CD4-positive, alpha-beta T cell (primary cell): ENCODE measurements at regions of chr3 and their contacts with region 1.

Region 1: GRCh38 chr3:139343895-139344856 is at the start of gene MRPS22:
- DNase-seq: peak; percentile 64 to 92 (median 75)
- ATAC-seq: peak; percentile 98
- H3K4me3 ChIP-seq: peak within 1 kb of the TSS; percentile 92
- H3K4me3 Mint-ChIP-seq: no peak within 1 kb of the TSS
- H3K27ac ChIP-seq: peak within 1 kb of the TSS; percentile 73 to 93
- H3K27ac Mint-ChIP-seq: no peak within 1 kb of the TSS
- H3K4me1 ChIP-seq: peaks cover 21% of the 10 kb centered on the region
- H3K4me1 Mint-ChIP-seq: peaks cover 5% of the 10 kb centered on the region
- H3K27me3 ChIP-seq: no peaks in the 10 kb centered on the region
- H3K27me3 Mint-ChIP-seq: peaks cover 8% of the 10 kb centered on the region
- CTCF ChIP-seq: no peak
- total RNA-seq, gene MRPS22: 39.6 to 42.6 TPM

Region 2: GRCh38 chr3:138329127-138329983 is 1014.8 kb before region 1 on chr3 and contains the start of gene NME9:
- CTCF ChIA-PET with region 1: no interaction called
- POLR2A ChIA-PET with region 1: no interaction called
- intact Hi-C with region 1: loop called in 1 of 2 experiments (anchors 10 kb)
- DNase-seq: peak; percentile 80 to 97 (median 90)
- ATAC-seq: peak; percentile 85
- H3K4me3 ChIP-seq: peak within 1 kb of the TSS; percentile 69
- H3K4me3 Mint-ChIP-seq: peak within 1 kb of the TSS; percentile 98
- H3K27ac ChIP-seq: peak within 1 kb of the TSS; percentile 49 to 81
- H3K27ac Mint-ChIP-seq: peak within 1 kb of the TSS; percentile 88
- H3K4me1 ChIP-seq: peaks cover 20% of the 10 kb centered on the region
- H3K4me1 Mint-ChIP-seq: peaks cover 37% of the 10 kb centered on the region
- H3K27me3 ChIP-seq: no peaks in the 10 kb centered on the region
- H3K27me3 Mint-ChIP-seq: no peaks in the 10 kb centered on the region
- CTCF ChIP-seq: peak; percentile 71
- total RNA-seq, gene NME9: 0.80 TPM in 1 of 2 experiments, not detected in the other

Region 3: GRCh38 chr3:139329345-139329850 is 14.8 kb before region 1 on chr3:
- CTCF ChIA-PET with region 1: interaction called, 11 read pairs
- POLR2A ChIA-PET with region 1: interaction called, 3 read pairs
- intact Hi-C with region 1: no loop called
- DNase-seq: peak; percentile 74 to 91 (median 84)
- ATAC-seq: peak; percentile 97
- H3K4me3 ChIP-seq: peak overlapping the region; percentile 23
- H3K4me3 Mint-ChIP-seq: peak overlapping the region; percentile 27
- H3K27ac ChIP-seq: no peak overlapping the region
- H3K27ac Mint-ChIP-seq: no peak overlapping the region
- H3K4me1 ChIP-seq: peaks cover 9% of the 10 kb centered on the region
- H3K4me1 Mint-ChIP-seq: peaks cover 17% of the 10 kb centered on the region
- H3K27me3 ChIP-seq: peaks cover 10 to 20% of the 10 kb centered on the region in 2 experiments
- H3K27me3 Mint-ChIP-seq: peaks cover 38% of the 10 kb centered on the region
- CTCF ChIP-seq: peak; percentile 99

Region 4: DNA sequence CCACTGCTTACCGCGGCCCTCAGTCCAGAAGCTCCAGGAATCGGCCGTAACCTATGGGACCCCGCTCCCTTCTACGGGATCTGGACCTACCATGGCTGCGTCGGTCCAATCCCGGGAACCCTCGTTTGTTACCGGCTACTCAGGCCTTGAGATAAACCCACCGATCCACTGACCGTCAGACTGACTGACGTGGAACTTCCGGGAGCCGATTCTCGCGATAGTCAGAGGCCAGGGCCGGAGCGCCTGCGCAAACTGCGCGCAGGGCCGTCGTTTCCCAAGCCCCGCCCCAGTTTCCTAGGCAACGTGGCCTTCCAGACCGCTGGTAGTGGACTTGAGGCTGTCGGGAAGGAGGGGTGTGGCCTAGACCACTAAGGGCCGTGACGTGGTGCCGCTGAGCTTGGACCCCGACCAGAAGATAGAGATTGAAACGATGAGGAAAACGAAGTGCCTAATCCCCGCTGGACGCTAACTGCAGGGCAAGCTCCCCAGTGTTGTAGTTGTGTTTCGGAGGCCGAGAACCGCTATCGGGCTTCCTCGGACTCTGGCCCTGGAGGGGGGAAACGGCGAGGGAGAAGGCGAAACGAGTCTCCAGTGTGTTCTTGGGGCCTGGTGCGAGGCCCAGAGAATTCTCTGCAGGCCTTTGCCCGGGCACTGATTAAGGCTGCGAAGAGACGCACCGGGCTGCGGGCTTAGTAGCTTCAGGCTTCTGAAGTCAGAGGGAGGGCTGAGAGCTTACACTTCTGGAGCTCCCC is 45.5 kb after region 1 on chr3 and contains the start of gene COPB2:
- CTCF ChIA-PET with region 1: no interaction called
- POLR2A ChIA-PET with region 1: interaction called, 6 read pairs
- intact Hi-C with region 1: loop called in 1 of 2 experiments (anchors 1 kb)
- DNase-seq: peak; percentile 82 to 97 (median 94)
- ATAC-seq: peak; percentile 82
- H3K4me3 ChIP-seq: peak within 1 kb of the TSS; percentile 71
- H3K4me3 Mint-ChIP-seq: peak within 1 kb of the TSS; percentile 96
- H3K27ac ChIP-seq: peak within 1 kb of the TSS; percentile 85 to 89
- H3K27ac Mint-ChIP-seq: peak within 1 kb of the TSS; percentile 98
- H3K4me1 ChIP-seq: peaks cover 26% of the 10 kb centered on the region
- H3K4me1 Mint-ChIP-seq: peaks cover 57% of the 10 kb centered on the region
- H3K27me3 ChIP-seq: no peaks in the 10 kb centered on the region
- H3K27me3 Mint-ChIP-seq: no peaks in the 10 kb centered on the region
- CTCF ChIP-seq: no peak
- total RNA-seq, gene COPB2: 13.0 to 13.8 TPM

Region 5: DNA sequence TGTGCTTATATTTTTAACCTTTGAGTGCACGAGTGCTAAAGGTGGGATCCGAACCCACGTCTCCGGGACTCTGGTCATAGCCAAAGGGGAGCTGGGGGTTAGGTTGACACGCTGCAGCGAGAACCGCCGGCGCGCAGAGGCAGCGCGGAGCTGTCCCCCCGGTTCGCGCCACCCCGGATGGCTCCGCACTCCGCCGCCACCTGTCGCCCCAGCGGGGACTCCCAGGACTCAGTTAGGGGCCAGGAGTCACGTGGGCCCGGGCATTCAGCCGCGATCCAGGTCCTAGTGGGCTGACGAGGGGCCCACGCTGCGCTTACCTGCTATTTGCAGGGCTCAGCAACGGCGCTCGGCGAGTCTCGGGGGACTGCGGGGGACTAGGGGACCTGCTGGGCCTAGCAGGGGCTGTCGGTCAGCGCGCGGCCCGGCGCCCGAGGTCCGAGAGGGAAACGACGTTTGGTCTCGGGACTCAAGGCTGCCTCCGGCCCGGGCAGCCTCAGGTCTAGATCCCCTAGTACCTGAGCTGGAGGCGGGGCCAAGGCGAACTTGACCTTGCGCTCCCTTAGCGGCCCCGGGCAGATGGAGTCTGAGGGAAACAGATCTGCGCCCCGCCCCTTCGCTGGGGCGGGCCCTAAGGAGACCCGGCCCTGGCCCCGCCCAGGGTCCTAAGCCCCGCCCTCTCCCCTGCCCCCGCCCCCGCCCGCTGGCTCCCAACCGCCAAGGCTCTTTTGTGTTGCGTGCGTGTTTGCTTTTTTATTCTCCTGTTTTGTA is 333.4 kb after region 1 on chr3 and contains the start of gene NMNAT3:
- CTCF ChIA-PET with region 1: no interaction called
- POLR2A ChIA-PET with region 1: no interaction called
- intact Hi-C with region 1: loop called in 1 of 2 experiments (anchors 5 kb)
- DNase-seq: peak; percentile 70 to 91 (median 77)
- ATAC-seq: peak; percentile 98
- H3K4me3 ChIP-seq: peak within 1 kb of the TSS; percentile 92
- H3K4me3 Mint-ChIP-seq: peak within 1 kb of the TSS; percentile 88
- H3K27ac ChIP-seq: no peak within 1 kb of the TSS
- H3K27ac Mint-ChIP-seq: no peak within 1 kb of the TSS
- H3K4me1 ChIP-seq: peaks cover 19% of the 10 kb centered on the region
- H3K4me1 Mint-ChIP-seq: peaks cover 13% of the 10 kb centered on the region
- H3K27me3 ChIP-seq: no peaks in the 10 kb centered on the region
- H3K27me3 Mint-ChIP-seq: no peaks in the 10 kb centered on the region
- CTCF ChIP-seq: no peak
- total RNA-seq, gene NMNAT3: 1.5 to 1.9 TPM

Region 6: GRCh38 chr3:140941434-140942220 is 1597.5 kb after region 1 on chr3 and contains the start of gene SLC25A36:
- CTCF ChIA-PET with region 1: no interaction called
- POLR2A ChIA-PET with region 1: no interaction called
- intact Hi-C with region 1: loop called in 1 of 2 experiments (anchors 5 kb)
- DNase-seq: peak; percentile 87 to 99 (median 94)
- ATAC-seq: peak; percentile 96
- H3K4me3 ChIP-seq: peak within 1 kb of the TSS; percentile 71
- H3K4me3 Mint-ChIP-seq: peak within 1 kb of the TSS; percentile 94
- H3K27ac ChIP-seq: peak within 1 kb of the TSS; percentile 71 to 78
- H3K27ac Mint-ChIP-seq: peak within 1 kb of the TSS; percentile 100
- H3K4me1 ChIP-seq: peaks cover 9% of the 10 kb centered on the region
- H3K4me1 Mint-ChIP-seq: peaks cover 42% of the 10 kb centered on the region
- H3K27me3 ChIP-seq: no peaks in the 10 kb centered on the region
- H3K27me3 Mint-ChIP-seq: no peaks in the 10 kb centered on the region
- CTCF ChIP-seq: no peak
- total RNA-seq, gene SLC25A36: 166 to 171 TPM